ENCODE measurements at regions of chr11 and their contacts with region 1.

Region 1: DNA sequence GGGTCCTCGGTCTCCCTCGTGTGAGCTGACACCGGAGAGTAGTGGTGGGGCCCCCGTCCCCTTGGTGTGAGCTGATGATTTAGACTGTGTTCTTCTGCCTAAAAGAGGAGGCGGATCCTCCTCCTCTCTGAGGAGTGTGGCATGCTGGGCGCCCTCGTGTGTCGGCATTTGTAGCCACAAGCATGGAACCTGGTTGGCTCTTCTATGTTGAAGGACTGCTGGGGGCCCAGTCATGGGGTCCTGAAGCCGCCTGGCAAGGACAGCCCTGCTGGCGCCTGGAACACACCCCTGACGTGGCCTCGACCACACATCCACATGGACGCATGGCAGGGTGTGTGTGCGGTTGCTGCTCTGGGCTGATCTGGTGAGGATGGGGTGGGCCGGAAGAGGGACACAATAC is 50.2 kb downstream of the AP2A2 start:
- DNase-seq: peak; percentile 4
- H3K4me3 ChIP-seq: no peak overlapping the region
- H3K27ac ChIP-seq: no peak overlapping the region
- H3K27me3 ChIP-seq: no peaks in the 10 kb centered on the region
- CTCF ChIP-seq: peak; percentile 46

Region 2: GRCh38 chr11:645536-645935 is 330.3 kb before region 1 on chr11:
- CTCF ChIA-PET with region 1: no interaction called
- POLR2A ChIA-PET with region 1: no interaction called
- DNase-seq: no peak
- H3K4me3 ChIP-seq: no peak overlapping the region
- H3K27ac ChIP-seq: no peak overlapping the region
- H3K27me3 ChIP-seq: peaks cover 1% of the 10 kb centered on the region
- CTCF ChIP-seq: no peak

Region 3: GRCh38 chr11:925496-926321 is 50.1 kb before region 1 on chr11 and contains the start of gene AP2A2:
- CTCF ChIA-PET with region 1: no interaction called
- POLR2A ChIA-PET with region 1: interaction called, 12 read pairs
- DNase-seq: peak; percentile 43
- H3K4me3 ChIP-seq: peak within 1 kb of the TSS; percentile 83
- H3K27ac ChIP-seq: peak within 1 kb of the TSS; percentile 77
- H3K27me3 ChIP-seq: no peaks in the 10 kb centered on the region
- CTCF ChIP-seq: peak; percentile 46
- polyA plus RNA-seq, gene AP2A2: 54.2 and 55.7 TPM in 2 replicates

Region 4: DNA sequence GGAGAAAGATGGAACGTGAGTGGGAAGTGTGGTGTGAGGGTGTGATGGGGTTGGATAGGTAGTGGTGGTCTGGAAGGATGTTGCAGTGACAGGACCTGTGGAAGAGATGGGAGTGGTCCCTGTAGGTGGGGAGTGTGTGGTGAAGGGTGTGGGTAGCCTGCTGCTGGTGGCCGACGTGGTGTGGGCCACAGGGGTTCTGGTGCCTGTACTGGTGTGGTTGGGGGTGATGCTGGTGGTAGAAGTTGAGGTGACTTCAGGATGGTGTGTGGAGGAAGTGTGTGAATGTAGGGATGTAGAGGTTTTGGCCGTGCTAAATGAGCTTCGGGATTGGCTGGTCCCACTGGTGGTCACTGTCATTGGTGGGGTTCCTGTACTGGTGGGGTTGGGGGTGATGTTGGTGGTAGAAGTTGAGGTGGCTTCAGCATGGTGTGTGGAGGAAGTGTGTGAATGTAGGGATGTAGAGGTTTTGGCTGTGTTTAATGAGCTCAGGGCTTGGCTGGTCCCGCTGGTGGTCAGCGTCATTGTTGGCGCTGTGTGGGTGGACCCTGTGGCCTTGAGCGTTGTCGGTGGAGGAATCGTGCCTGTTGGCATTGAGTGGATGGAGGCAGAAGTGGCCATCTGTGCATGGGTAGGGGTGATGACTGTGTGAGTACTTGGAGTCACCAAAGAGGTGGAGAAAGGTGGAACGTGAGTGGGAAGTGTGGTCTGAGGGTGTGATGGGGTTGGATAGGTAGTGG is 41.6 kb after region 1 on chr11:
- CTCF ChIA-PET with region 1: no interaction called
- POLR2A ChIA-PET with region 1: no interaction called
- DNase-seq: no peak
- H3K4me3 ChIP-seq: no peak overlapping the region
- H3K27ac ChIP-seq: no peak overlapping the region
- H3K27me3 ChIP-seq: no peaks in the 10 kb centered on the region
- CTCF ChIP-seq: no peak

Measured in AG04450 (cell line).